Activated CD8-positive, alpha-beta T cell treated with anti-CD3 and anti-CD28 coated beads, Interleukin-2, amount 10 ng/mL, durations not matched to agents 7 days and 5 days (primary cell): ENCODE measurements at regions of chr3 and their contacts with region 1.

Region 1: GRCh38 chr3:196620161-196620604 is 19.3 kb upstream of the NRROS start:
- DNase-seq: peak; percentile 51
- ATAC-seq: peak; percentile 53
- H3K4me3 Mint-ChIP-seq: peak overlapping the region; percentile 37
- H3K27ac Mint-ChIP-seq: peak overlapping the region; percentile 73
- H3K4me1 Mint-ChIP-seq: peaks cover 55% of the 10 kb centered on the region
- H3K27me3 Mint-ChIP-seq: no peaks in the 10 kb centered on the region

Region 2: DNA sequence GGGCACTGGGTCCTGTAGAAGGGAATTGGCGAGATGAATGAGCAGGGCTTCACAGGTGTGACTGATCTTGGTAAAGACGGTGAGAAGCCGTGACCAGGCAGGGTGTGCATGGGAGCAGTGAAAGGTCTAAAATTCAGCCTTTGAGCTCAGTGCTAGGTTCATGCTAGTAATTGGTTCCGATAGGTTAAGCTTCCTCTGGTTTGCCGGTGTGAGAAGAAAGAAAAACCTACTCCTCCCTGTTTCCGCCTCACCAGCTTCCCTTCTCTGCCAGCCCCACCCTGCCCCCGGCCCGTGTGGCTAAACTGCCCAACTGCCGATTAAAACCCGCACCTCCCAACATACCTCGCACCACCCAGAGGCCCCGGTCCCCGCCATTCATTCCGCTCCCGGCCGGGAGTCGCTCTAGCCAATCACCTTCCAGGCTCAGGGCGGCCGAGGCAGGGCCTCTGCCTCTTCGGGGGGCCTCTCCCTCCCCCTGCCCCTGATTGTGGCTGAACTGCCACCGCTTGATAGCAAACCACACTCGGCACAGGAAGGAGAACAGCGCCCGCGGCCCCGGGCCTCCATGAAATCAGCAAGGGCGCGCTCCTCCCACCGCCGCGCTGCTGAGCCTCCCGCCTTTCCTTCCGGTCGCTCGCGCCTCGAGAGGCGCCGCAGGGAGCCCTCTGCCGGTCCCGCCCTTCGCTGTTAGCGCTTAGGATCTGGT is 12.0 kb after region 1 on chr3:
- CTCF ChIA-PET with region 1: interaction called, 8 read pairs
- POLR2A ChIA-PET with region 1: interaction called, 28 read pairs
- DNase-seq: peak; percentile 97
- ATAC-seq: peak; percentile 87
- H3K4me3 Mint-ChIP-seq: peak overlapping the region; percentile 94
- H3K27ac Mint-ChIP-seq: peak overlapping the region; percentile 99
- H3K4me1 Mint-ChIP-seq: peaks cover 79% of the 10 kb centered on the region
- H3K27me3 Mint-ChIP-seq: no peaks in the 10 kb centered on the region

Region 3: GRCh38 chr3:196694202-196694638 is 74.0 kb after region 1 on chr3:
- CTCF ChIA-PET with region 1: no interaction called
- POLR2A ChIA-PET with region 1: no interaction called
- DNase-seq: peak; percentile 31
- ATAC-seq: peak; percentile 74
- H3K4me3 Mint-ChIP-seq: no peak overlapping the region
- H3K27ac Mint-ChIP-seq: peak overlapping the region; percentile 25
- H3K4me1 Mint-ChIP-seq: peaks cover 2% of the 10 kb centered on the region
- H3K27me3 Mint-ChIP-seq: peaks cover 2% of the 10 kb centered on the region